Gastrocnemius medialis (tissue), 4 donors: ENCODE measurements at regions of chr7 and their contacts with region 1.

Region 1: GRCh38 chr7:140175221-140176121 is 1.3 kb downstream of the KDM7A start:
- DNase-seq: peak; percentile 93 to 94
- ATAC-seq: peak; percentile 77 to 79
- H3K4me3 ChIP-seq: peak overlapping the region; percentile 71 to 95 (median 80)
- H3K27ac ChIP-seq: peak overlapping the region; percentile 94 to 99 (median 98)
- H3K4me1 ChIP-seq: peaks cover 38 to 40% of the 10 kb centered on the region in 2 donors
- H3K27me3 ChIP-seq: no peaks in the 10 kb centered on the region
- CTCF ChIP-seq: peak; percentile 78 to 92 (median 86)
- POLR2A ChIP-seq: peak; percentile 97 to 98

Region 2: DNA sequence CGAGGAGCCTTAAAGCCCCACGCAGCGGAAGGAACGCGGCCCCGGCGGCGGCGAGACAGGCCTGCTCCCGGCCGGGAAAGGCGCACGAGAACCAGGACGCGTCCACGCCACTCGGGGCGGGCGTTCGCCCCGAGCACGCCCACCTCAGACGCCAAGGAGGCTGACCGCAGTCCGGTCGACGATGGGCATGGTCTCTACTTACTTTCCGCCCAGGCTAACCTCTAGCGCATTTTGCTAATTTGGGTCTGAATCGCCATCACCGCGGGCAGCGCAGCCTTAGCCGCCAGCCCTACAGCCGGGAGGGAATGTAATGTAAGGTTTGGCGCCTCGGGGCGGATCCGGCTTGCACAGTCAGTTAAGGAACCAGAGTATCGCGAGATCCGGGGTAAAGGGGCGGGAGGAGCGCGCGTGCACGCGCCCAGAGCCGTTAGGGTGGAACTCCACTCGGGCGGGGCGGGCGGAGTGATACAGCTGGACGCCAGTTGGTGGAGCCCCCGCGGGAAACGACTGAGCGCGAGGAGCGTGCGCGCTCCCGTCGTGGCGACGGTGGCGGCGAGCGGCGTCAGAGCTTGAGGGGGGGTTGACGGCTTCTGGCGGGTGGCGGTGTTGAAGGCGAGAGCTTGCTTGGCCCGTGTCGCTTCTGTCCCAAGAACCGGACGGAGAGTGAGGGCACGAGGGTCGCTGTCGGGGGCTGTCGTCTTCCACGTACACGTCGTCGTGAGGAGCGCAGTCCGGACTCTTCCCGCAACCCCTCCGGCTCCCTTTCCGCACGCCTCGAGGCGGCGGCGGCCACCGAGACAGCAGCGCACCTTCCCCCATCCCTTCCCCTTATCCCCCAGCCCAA is 815.9 kb before region 1 on chr7 and contains the start of gene LUC7L2:
- in situ Hi-C with region 1: no loop called
- intact Hi-C with region 1: loop called (anchors 5 kb)
- DNase-seq: peak; percentile 99 to 100
- ATAC-seq: peak; percentile 87 to 88
- H3K4me3 ChIP-seq: peak within 1 kb of the TSS; percentile 84 to 99 (median 95)
- H3K27ac ChIP-seq: peak within 1 kb of the TSS; percentile 99 to 100 (median 100)
- H3K4me1 ChIP-seq: peaks cover 33 to 34% of the 10 kb centered on the region in 2 donors
- H3K27me3 ChIP-seq: no peaks in the 10 kb centered on the region
- CTCF ChIP-seq: peak in 2 of 5 experiments; percentile 31
- POLR2A ChIP-seq: peak; percentile 90 to 95
- total RNA-seq, gene LUC7L2: 49.2 to 79.7 (median 54.0) TPM

Region 3: GRCh38 chr7:139777948-139778841 is 397.3 kb before region 1 on chr7 and contains the start of gene HIPK2:
- in situ Hi-C with region 1: loop called in 1 of 4 experiments (anchors 25 kb)
- intact Hi-C with region 1: loop called (anchors 5 kb)
- DNase-seq: peak; percentile 54 to 71
- ATAC-seq: peak; percentile 57 to 69
- H3K4me3 ChIP-seq: peak within 1 kb of the TSS; percentile 81 to 91 (median 86)
- H3K27ac ChIP-seq: peak within 1 kb of the TSS; percentile 91 to 99 (median 96)
- H3K4me1 ChIP-seq: peaks cover 30 to 32% of the 10 kb centered on the region in 2 donors
- H3K27me3 ChIP-seq: no peaks in the 10 kb centered on the region
- CTCF ChIP-seq: no peak
- POLR2A ChIP-seq: peak in 1 of 2 donors; percentile 55
- total RNA-seq, gene HIPK2: 30.5 to 77.4 (median 58.9) TPM

Region 4: DNA sequence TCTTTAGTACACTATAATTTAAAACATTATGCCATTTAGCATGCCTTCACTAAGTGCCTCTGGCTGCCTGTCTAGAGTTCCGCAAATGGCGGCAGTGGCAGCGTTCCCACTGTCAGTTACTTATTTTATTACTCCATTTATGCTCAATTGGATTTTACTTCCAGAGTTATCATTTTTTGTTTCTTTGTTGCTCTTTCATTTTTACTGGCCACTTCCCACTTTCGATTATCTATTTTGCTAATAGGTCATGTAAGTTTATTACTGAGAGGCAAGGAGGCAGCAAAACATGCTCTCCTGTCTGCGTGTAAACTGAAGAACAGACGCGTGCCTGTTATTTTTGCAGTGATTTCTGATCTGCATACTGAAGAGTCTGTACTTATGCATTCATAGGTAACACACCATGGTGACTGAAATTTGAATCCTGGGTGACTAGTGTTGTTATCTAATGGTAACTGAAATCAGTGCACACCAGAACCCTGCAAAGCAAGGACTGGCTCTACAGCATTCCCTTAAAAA is 21.7 kb before region 1 on chr7:
- in situ Hi-C with region 1: no loop called
- intact Hi-C with region 1: loop called (anchors 1 kb)
- DNase-seq: peak in 1 of 2 donors; percentile 32
- ATAC-seq: peak in 1 of 2 donors; percentile 67
- H3K4me3 ChIP-seq: no peak overlapping the region
- H3K27ac ChIP-seq: peak overlapping the region; percentile 70 to 90 (median 79)
- H3K4me1 ChIP-seq: peaks cover 79 to 83% of the 10 kb centered on the region in 2 donors
- H3K27me3 ChIP-seq: no peaks in the 10 kb centered on the region
- CTCF ChIP-seq: no peak
- POLR2A ChIP-seq: peak in 1 of 2 donors; percentile 52

Region 5: DNA sequence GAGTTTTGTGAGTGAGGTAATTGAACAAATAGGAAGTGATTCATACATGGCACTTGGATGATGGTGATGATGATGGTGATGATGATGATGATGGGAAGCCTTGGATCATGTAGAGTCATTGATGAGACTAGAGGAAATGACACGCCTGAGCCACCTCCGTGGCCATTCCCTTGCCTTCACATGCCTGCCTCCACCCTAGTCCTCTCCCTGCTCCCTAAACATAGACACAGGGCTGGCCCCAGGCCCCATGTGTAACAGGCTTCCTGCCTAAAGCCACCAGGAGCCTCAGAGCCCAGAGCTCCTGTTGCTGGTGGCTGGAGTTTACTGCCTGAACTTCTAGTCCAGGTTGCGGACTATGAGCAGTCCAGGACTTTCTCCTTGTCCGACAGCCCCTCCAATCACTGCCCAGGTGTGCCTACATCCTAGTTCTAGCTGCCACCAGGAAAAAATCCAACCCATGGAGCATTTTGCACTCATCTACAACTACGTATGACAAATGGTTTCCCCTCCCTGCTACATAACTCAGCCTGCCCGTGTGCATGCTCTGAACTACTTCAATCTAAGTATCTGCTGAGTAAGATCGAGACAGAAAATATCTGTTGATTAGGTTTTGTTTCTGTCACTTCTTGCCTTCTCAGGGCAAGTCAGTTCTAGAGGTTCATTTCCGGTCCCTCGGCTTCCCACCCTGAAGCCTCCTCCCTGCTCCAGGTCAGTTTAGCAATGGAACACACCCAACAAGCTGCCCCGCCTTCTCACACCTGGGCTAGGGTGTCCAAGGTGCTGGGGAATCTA is 36.8 kb after region 1 on chr7:
- in situ Hi-C with region 1: no loop called
- intact Hi-C with region 1: no loop called
- DNase-seq: no peak
- ATAC-seq: no peak
- H3K4me3 ChIP-seq: no peak overlapping the region
- H3K27ac ChIP-seq: no peak overlapping the region
- H3K4me1 ChIP-seq: no peaks in the 10 kb centered on the region
- H3K27me3 ChIP-seq: no peaks in the 10 kb centered on the region
- CTCF ChIP-seq: no peak
- POLR2A ChIP-seq: no peak

Region 6: GRCh38 chr7:140397784-140398750 is 222.6 kb after region 1 on chr7 and contains the start of gene SLC37A3:
- in situ Hi-C with region 1: no loop called
- intact Hi-C with region 1: loop called (anchors 5 kb)
- DNase-seq: peak; percentile 76
- ATAC-seq: peak; percentile 92 to 97
- H3K4me3 ChIP-seq: peak within 1 kb of the TSS; percentile 78 to 96 (median 94)
- H3K27ac ChIP-seq: peak within 1 kb of the TSS; percentile 82 to 88 (median 86)
- H3K4me1 ChIP-seq: no peaks in the 10 kb centered on the region
- H3K27me3 ChIP-seq: no peaks in the 10 kb centered on the region
- CTCF ChIP-seq: peak in 4 of 5 experiments; percentile 15 to 42 (median 23)
- POLR2A ChIP-seq: peak; percentile 61 to 77
- total RNA-seq, gene SLC37A3: 13.4 to 36.8 (median 18.0) TPM

Region 7: DNA sequence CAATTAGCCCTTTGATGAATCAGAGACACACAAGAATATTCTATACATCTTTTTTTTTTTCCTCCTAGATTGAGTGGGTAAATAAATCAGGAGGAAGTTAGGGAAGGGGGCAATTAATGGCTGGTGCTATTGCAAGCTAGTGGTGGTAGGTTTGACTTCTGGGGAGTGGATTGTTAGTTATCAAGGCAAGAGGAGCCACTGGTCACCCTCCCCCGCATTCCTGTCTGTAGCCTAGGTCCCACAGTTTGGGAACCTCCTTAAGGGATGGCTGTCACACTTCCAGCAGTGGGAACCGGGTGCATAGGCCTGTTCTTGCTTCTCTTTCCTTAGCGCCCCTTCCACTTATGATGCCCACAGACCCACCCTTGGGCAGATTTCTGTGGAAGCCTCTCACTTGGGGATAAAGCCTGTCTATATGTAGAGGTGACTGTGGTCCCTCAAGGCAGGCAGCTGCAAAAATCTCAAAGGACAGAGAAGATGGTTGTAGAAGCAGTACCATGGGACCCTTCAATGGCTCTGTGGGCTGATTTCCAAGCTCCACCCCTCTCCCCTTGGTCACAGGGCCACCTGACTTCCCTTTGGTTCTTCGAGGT is 495.0 kb after region 1 on chr7:
- in situ Hi-C with region 1: no loop called
- intact Hi-C with region 1: no loop called
- DNase-seq: no peak
- ATAC-seq: no peak
- H3K4me3 ChIP-seq: no peak overlapping the region
- H3K27ac ChIP-seq: no peak overlapping the region
- H3K4me1 ChIP-seq: peaks cover 16 to 22% of the 10 kb centered on the region in 2 donors
- H3K27me3 ChIP-seq: no peaks in the 10 kb centered on the region
- CTCF ChIP-seq: no peak
- POLR2A ChIP-seq: no peak

Region 8: GRCh38 chr7:140924019-140924820 is 748.7 kb after region 1 on chr7:
- in situ Hi-C with region 1: no loop called
- intact Hi-C with region 1: loop called (anchors 10 kb)
- DNase-seq: peak; percentile 47 to 49
- ATAC-seq: peak; percentile 78 to 83
- H3K4me3 ChIP-seq: peak overlapping the region; percentile 71 to 97 (median 95)
- H3K27ac ChIP-seq: peak overlapping the region; percentile 90 to 99 (median 96)
- H3K4me1 ChIP-seq: peaks cover 19 to 36% of the 10 kb centered on the region in 2 donors
- H3K27me3 ChIP-seq: no peaks in the 10 kb centered on the region
- CTCF ChIP-seq: peak in 3 of 5 experiments; percentile 44 to 61 (median 49)
- POLR2A ChIP-seq: peak; percentile 23 to 27